ENCODE measurements at regions of chr3 and their contacts with region 1.

Region 1: DNA sequence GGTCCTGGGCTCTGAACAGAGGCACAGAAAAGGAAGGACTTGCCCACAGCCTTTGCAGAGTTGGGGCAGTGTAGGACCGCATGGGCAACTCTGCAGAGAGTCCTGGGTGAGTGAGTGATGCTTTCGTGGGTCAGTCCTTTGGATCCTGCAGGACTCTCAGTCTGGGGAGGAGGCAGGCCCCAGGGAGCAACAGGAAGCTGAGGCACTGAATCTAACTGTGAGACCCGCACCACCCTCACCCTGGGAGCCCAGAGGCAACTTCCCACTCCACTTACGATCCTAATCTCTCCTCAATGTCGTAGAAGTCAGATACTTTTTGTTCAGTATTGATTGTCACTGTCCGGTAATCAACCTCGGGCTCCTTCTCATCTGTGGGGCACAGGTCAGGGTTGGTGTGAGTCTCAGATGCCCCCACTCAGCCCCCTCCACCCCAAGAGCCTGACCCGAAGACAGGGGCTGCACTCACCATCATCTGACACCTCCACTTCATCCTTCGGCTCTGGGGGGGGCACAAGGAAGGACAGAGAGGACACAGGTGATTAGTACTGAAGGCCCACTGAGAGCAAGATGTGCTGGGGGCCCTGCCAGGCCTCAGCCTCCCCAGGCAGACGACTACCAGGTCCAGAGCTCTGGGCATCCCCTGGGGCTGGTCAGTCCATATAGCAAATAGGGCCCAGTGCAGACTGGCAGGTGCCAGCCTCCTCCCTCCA is 64.0 kb upstream of the HACD2 start:
- DNase-seq: no peak
- H3K4me3 ChIP-seq: no peak overlapping the region
- H3K27ac ChIP-seq: peak overlapping the region in 2 of 4 donors; percentile 13 to 49
- H3K4me1 ChIP-seq: peaks cover 6 to 21% (median 13%) of the 10 kb centered on the region in 3 donors
- H3K27me3 ChIP-seq: no peaks in the 10 kb centered on the region
- CTCF ChIP-seq: no peak
- POLR2A ChIP-seq: no peak

Region 2: DNA sequence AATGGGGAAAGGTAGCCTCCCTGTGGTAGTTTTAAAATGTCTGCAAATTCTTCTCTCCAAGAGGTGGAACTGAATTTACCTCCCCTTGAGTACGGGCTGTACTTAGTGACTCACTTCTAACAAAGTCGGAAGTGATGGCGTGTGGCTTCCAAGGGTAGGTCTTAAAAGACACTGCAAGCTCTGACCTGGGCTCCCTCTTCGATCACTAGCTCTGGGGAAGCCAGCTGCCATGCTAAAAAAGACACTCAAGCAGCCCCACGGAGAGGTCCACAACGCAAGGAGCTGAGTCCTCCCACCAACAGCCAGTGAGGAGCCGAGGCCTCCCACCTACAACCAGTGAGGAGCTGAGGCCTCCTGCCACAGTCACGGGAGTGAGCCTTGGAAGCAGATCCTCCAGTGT is 58.0 kb after region 1 on chr3:
- intact Hi-C with region 1: loop called (anchors 5 kb)
- DNase-seq: no peak
- H3K4me3 ChIP-seq: no peak overlapping the region
- H3K27ac ChIP-seq: no peak overlapping the region
- H3K4me1 ChIP-seq: peaks cover 0 to 23% (median 2%) of the 10 kb centered on the region in 3 donors
- H3K27me3 ChIP-seq: no peaks in the 10 kb centered on the region
- CTCF ChIP-seq: no peak
- POLR2A ChIP-seq: no peak